Dendritic cell treated with granulocyte-macrophage colony-stimulating factor and Interleukin-4, amounts not matched to agents 40 ng/mL and 50 ng/mL, for 4 days (primary cell): ENCODE measurements at regions of chr9 and their contacts with region 1.

Region 1: GRCh38 chr9:127450830-127451724 is at the starts of genes LRSAM1 and RPL12:
- H3K4me3 Mint-ChIP-seq: peak within 1 kb of the TSS; percentile 92
- H3K27ac Mint-ChIP-seq: peak within 1 kb of the TSS; percentile 96
- H3K4me1 Mint-ChIP-seq: peaks cover 76% of the 10 kb centered on the region
- H3K27me3 Mint-ChIP-seq: no peaks in the 10 kb centered on the region

Region 2: DNA sequence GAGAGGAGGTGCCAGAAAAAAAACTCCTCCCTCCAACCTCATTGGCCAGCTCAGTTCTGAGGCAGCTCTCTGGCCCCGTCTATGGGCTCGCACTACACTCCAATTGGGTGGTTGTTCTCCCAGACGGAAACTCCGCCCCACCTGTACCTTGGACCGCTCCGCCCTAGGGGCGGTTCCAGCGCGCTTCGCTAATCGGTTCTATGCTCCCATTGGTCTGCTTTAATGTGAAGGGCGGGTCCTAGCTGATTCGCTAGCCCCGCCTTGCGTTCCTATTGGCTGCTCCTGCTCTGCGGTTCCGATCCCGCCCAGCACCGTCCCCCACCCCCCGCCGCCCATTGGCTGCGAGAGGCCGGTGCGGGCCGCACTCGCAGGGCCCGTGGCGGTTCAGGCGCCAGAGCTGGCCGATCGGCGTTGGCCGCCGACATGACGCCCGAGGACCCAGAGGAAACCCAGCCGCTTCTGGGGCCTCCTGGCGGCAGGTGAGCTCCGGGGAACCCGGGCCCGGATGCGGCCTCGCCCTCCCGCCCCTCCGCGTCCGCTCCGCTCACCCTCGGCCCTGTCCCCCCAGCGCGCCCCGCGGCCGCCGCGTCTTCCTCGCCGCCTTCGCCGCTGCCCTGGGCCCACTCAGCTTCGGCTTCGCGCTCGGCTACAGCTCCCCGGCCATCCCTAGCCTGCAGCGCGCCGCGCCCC is 54.1 kb before region 1 on chr9 and contains the start of gene SLC2A8:
- intact Hi-C with region 1: loop called (anchors 2 kb)
- H3K4me3 Mint-ChIP-seq: peak within 1 kb of the TSS; percentile 81
- H3K27ac Mint-ChIP-seq: peak within 1 kb of the TSS; percentile 80
- H3K4me1 Mint-ChIP-seq: peaks cover 34% of the 10 kb centered on the region
- H3K27me3 Mint-ChIP-seq: peaks cover 24% of the 10 kb centered on the region

Region 3: GRCh38 chr9:127423934-127424675 is 27.0 kb before region 1 on chr9 and contains the start of gene ZNF79:
- intact Hi-C with region 1: loop called (anchors 1 kb)
- H3K4me3 Mint-ChIP-seq: peak within 1 kb of the TSS; percentile 99
- H3K27ac Mint-ChIP-seq: peak within 1 kb of the TSS; percentile 94
- H3K4me1 Mint-ChIP-seq: peaks cover 52% of the 10 kb centered on the region
- H3K27me3 Mint-ChIP-seq: no peaks in the 10 kb centered on the region

Region 4: DNA sequence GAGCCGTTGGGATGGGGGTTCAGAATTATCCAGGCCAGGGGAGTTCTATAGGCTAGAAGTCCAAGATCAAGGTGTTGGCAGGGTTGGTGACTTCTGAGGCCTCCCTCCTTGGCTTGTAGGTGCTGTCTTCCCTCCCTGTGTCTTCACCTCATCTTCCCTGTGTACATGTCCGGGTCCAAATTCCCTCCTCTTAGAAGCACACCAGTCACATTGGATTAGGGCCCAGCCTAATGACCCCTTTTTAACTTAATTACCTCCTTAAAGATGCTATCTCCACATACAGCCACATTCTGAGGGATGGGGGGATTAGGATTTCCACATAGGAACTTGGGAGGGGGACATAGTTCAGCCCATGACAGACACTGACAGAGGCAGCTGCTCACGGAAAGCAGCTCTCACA is 12.3 kb after region 1 on chr9:
- intact Hi-C with region 1: no loop called
- H3K4me3 Mint-ChIP-seq: no peak overlapping the region
- H3K27ac Mint-ChIP-seq: no peak overlapping the region
- H3K4me1 Mint-ChIP-seq: peaks cover 8% of the 10 kb centered on the region
- H3K27me3 Mint-ChIP-seq: no peaks in the 10 kb centered on the region

Region 5: GRCh38 chr9:127473501-127473900 is 22.4 kb after region 1 on chr9:
- intact Hi-C with region 1: no loop called
- H3K4me3 Mint-ChIP-seq: no peak overlapping the region
- H3K27ac Mint-ChIP-seq: no peak overlapping the region
- H3K4me1 Mint-ChIP-seq: no peaks in the 10 kb centered on the region
- H3K27me3 Mint-ChIP-seq: no peaks in the 10 kb centered on the region